Colonic mucosa (tissue), 4 donors: ENCODE measurements at regions of chr3 and their contacts with region 1.

Region 1: GRCh38 chr3:122101646-122102045 is 46.5 kb downstream of the CD86 start:
- DNase-seq: peak; percentile 32
- H3K4me3 ChIP-seq: no peak overlapping the region
- H3K27ac ChIP-seq: no peak overlapping the region
- H3K4me1 ChIP-seq: no peaks in the 10 kb centered on the region
- H3K27me3 ChIP-seq: no peaks in the 10 kb centered on the region
- CTCF ChIP-seq: peak; percentile 35

Region 2: GRCh38 chr3:121924734-121925133 is 176.9 kb before region 1 on chr3:
- intact Hi-C with region 1: no loop called
- DNase-seq: no peak
- H3K4me3 ChIP-seq: no peak overlapping the region
- H3K27ac ChIP-seq: no peak overlapping the region
- H3K4me1 ChIP-seq: no peaks in the 10 kb centered on the region
- H3K27me3 ChIP-seq: no peaks in the 10 kb centered on the region
- CTCF ChIP-seq: no peak

Region 3: DNA sequence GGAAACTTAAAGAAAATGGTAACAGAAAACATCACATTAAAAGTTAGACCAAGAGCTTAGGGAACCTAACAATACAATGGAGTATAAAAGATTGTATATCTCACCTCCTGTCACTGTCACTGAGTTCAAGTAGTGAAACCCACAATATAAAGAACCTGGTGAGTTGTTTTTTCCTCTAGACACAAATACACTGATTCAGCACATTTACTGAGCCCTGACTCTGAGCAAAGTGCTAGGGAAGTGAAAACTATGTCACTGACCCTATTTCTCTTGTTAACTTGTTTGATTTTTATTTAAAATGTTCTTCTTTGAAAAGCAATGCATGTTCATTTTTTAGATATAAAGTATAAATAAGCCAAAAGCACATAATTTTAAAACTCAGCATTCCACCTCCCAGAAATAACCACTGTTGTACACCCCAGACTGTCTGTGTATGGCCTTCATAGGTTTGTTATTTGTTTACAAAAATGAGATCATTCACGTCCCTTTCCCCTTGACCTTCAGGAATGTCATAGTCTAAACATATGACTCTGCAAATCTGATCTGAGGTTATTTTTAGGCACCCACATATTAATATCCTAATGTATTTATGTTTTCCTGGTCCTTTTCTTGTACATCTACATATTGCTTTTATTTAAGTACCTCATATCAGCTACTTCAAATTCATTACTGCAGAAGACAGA is 154.3 kb after region 1 on chr3:
- intact Hi-C with region 1: loop called (anchors 2 kb)
- DNase-seq: no peak
- H3K4me3 ChIP-seq: no peak overlapping the region
- H3K27ac ChIP-seq: no peak overlapping the region
- H3K4me1 ChIP-seq: no peaks in the 10 kb centered on the region
- H3K27me3 ChIP-seq: no peaks in the 10 kb centered on the region
- CTCF ChIP-seq: no peak

Region 4: GRCh38 chr3:122356415-122356814 is 254.8 kb after region 1 on chr3:
- intact Hi-C with region 1: loop called (anchors 10 kb)
- DNase-seq: peak; percentile 79
- H3K4me3 ChIP-seq: no peak overlapping the region
- H3K27ac ChIP-seq: no peak overlapping the region
- H3K4me1 ChIP-seq: peaks cover 3% of the 10 kb centered on the region
- H3K27me3 ChIP-seq: no peaks in the 10 kb centered on the region
- CTCF ChIP-seq: peak; percentile 33